Activated CD8-positive, alpha-beta T cell treated with anti-CD3 and anti-CD28 coated beads for 36 hours (primary cell): ENCODE measurements at regions of chr15 and their contacts with region 1.

Region 1: GRCh38 chr15:72231066-72231846 is at the start of gene PKM:
- DNase-seq: peak; percentile 99
- ATAC-seq: peak; percentile 52
- H3K4me3 Mint-ChIP-seq: peak within 1 kb of the TSS; percentile 100
- H3K27ac Mint-ChIP-seq: peak within 1 kb of the TSS; percentile 100
- H3K4me1 Mint-ChIP-seq: peaks cover 26% of the 10 kb centered on the region
- H3K27me3 Mint-ChIP-seq: no peaks in the 10 kb centered on the region
- CTCF ChIP-seq: no peak
- total RNA-seq, gene PKM: 2,565 to 2,588 TPM

Region 2: GRCh38 chr15:72199711-72200212 is 31.5 kb before region 1 on chr15:
- CTCF ChIA-PET with region 1: interaction called, 35 read pairs
- POLR2A ChIA-PET with region 1: interaction called, 23 read pairs
- intact Hi-C with region 1: no loop called
- DNase-seq: peak; percentile 82
- ATAC-seq: peak; percentile 52
- H3K4me3 Mint-ChIP-seq: no peak overlapping the region
- H3K27ac Mint-ChIP-seq: no peak overlapping the region
- H3K4me1 Mint-ChIP-seq: peaks cover 23% of the 10 kb centered on the region
- H3K27me3 Mint-ChIP-seq: peaks cover 11% of the 10 kb centered on the region
- CTCF ChIP-seq: peak; percentile 73

Region 3: GRCh38 chr15:72206677-72207000 is 24.6 kb before region 1 on chr15:
- CTCF ChIA-PET with region 1: interaction called, 35 read pairs
- POLR2A ChIA-PET with region 1: interaction called, 24 read pairs
- intact Hi-C with region 1: no loop called
- DNase-seq: no peak
- ATAC-seq: no peak
- H3K4me3 Mint-ChIP-seq: no peak overlapping the region
- H3K27ac Mint-ChIP-seq: peak overlapping the region; percentile 46
- H3K4me1 Mint-ChIP-seq: peaks cover 29% of the 10 kb centered on the region
- H3K27me3 Mint-ChIP-seq: no peaks in the 10 kb centered on the region
- CTCF ChIP-seq: no peak

Region 4: GRCh38 chr15:72217216-72217615 is 14.0 kb before region 1 on chr15:
- CTCF ChIA-PET with region 1: interaction called, 26 read pairs
- POLR2A ChIA-PET with region 1: interaction called, 28 read pairs
- intact Hi-C with region 1: no loop called
- DNase-seq: no peak
- ATAC-seq: no peak
- H3K4me3 Mint-ChIP-seq: no peak overlapping the region
- H3K27ac Mint-ChIP-seq: peak overlapping the region; percentile 55
- H3K4me1 Mint-ChIP-seq: peaks cover 54% of the 10 kb centered on the region
- H3K27me3 Mint-ChIP-seq: no peaks in the 10 kb centered on the region
- CTCF ChIP-seq: no peak

Region 5: GRCh38 chr15:72265031-72265430 is 33.8 kb after region 1 on chr15:
- CTCF ChIA-PET with region 1: interaction called, 17 read pairs
- POLR2A ChIA-PET with region 1: interaction called, 20 read pairs
- intact Hi-C with region 1: no loop called
- DNase-seq: no peak
- ATAC-seq: no peak
- H3K4me3 Mint-ChIP-seq: no peak overlapping the region
- H3K27ac Mint-ChIP-seq: peak overlapping the region; percentile 9
- H3K4me1 Mint-ChIP-seq: peaks cover 44% of the 10 kb centered on the region
- H3K27me3 Mint-ChIP-seq: no peaks in the 10 kb centered on the region
- CTCF ChIP-seq: no peak

Region 6: GRCh38 chr15:72272213-72273002 is 41.2 kb after region 1 on chr15 and contains the start of gene PARP6:
- CTCF ChIA-PET with region 1: interaction called, 13 read pairs
- POLR2A ChIA-PET with region 1: interaction called, 15 read pairs
- intact Hi-C with region 1: loop called (anchors 2 kb)
- DNase-seq: peak; percentile 98
- ATAC-seq: peak; percentile 98
- H3K4me3 Mint-ChIP-seq: peak within 1 kb of the TSS; percentile 87
- H3K27ac Mint-ChIP-seq: peak within 1 kb of the TSS; percentile 91
- H3K4me1 Mint-ChIP-seq: peaks cover 36% of the 10 kb centered on the region
- H3K27me3 Mint-ChIP-seq: no peaks in the 10 kb centered on the region
- CTCF ChIP-seq: peak; percentile 56
- total RNA-seq, gene PARP6: 48.7 to 50.1 TPM

Region 7: GRCh38 chr15:72375847-72376581 is 144.8 kb after region 1 on chr15 and contains the start of gene HEXA:
- CTCF ChIA-PET with region 1: no interaction called
- POLR2A ChIA-PET with region 1: interaction called, 13 read pairs
- intact Hi-C with region 1: no loop called
- DNase-seq: peak; percentile 99
- ATAC-seq: peak; percentile 87
- H3K4me3 Mint-ChIP-seq: peak within 1 kb of the TSS; percentile 85
- H3K27ac Mint-ChIP-seq: peak within 1 kb of the TSS; percentile 94
- H3K4me1 Mint-ChIP-seq: peaks cover 29% of the 10 kb centered on the region
- H3K27me3 Mint-ChIP-seq: peaks cover 2% of the 10 kb centered on the region
- CTCF ChIP-seq: no peak
- total RNA-seq, gene HEXA: 55.8 to 66.8 TPM